ENCODE measurements at regions of chr10 and their contacts with region 1.

Region 1: GRCh38 chr10:70558871-70559810 is 43.4 kb downstream of the PRF1 start:
- DNase-seq: peak; percentile 64 to 80 (median 67)
- H3K4me3 ChIP-seq: peak overlapping the region; percentile 70
- H3K4me3 Mint-ChIP-seq: peak overlapping the region; percentile 80 to 94 (median 87)
- H3K27ac ChIP-seq: peak overlapping the region; percentile 74
- H3K27ac Mint-ChIP-seq: peak overlapping the region; percentile 32 to 96 (median 91)
- H3K4me1 ChIP-seq: peaks cover 11% of the 10 kb centered on the region
- H3K4me1 Mint-ChIP-seq: peaks cover 19 to 27% (median 22%) of the 10 kb centered on the region in 3 donors
- H3K27me3 ChIP-seq: no peaks in the 10 kb centered on the region
- H3K27me3 Mint-ChIP-seq: peaks cover 0 to 7% of the 10 kb centered on the region in 2 donors

Region 2: GRCh38 chr10:70578371-70578947 is 19.3 kb after region 1 on chr10:
- CTCF ChIA-PET with region 1: interaction called, 14 read pairs
- POLR2A ChIA-PET with region 1: no interaction called
- DNase-seq: peak; percentile 27 to 84 (median 83)
- H3K4me3 ChIP-seq: no peak overlapping the region
- H3K4me3 Mint-ChIP-seq: peak overlapping the region; percentile 26 to 76 (median 54)
- H3K27ac ChIP-seq: peak overlapping the region; percentile 36
- H3K27ac Mint-ChIP-seq: peak overlapping the region; percentile 82 to 98 (median 92)
- H3K4me1 ChIP-seq: peaks cover 50% of the 10 kb centered on the region
- H3K4me1 Mint-ChIP-seq: peaks cover 52 to 58% (median 53%) of the 10 kb centered on the region in 3 donors
- H3K27me3 ChIP-seq: no peaks in the 10 kb centered on the region
- H3K27me3 Mint-ChIP-seq: no peaks in the 10 kb centered on the region

Region 3: DNA sequence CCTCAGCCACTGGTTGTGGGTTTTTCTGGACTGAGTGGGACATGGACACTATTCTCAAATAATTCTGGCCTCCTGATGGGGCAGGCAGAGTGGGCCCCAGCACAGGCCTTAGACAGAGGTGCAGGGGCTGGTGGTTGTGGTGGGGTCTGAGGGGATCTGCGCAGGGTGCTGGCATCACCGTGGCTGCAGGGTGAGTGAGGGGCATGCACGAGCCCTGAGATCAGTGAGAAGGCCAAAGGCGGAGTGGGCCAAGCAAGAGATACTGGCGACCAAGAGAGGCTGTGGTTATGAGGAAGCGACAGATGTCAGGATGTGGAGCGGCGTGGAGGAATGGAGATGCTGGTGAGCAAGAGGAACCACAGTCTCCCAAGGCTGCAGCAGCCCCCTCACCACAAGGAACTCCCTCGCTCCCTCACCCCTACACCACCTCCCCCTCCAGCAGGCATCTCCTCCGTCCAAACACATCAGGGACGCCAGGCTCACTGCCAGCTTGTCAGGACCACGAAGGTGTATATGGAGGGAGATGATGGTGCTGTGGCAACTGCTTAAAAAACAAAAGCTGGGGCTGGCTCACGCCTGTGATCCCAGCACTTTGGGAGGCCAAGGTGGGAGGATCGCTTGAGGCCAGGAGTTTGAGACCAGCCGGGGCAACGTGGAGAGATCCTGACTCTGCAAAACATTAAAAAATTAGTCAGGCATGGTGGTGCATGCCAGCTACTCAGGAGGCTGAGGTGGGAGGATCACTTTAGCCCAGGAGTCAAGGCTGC is 33.8 kb after region 1 on chr10:
- CTCF ChIA-PET with region 1: interaction called, 13 read pairs
- POLR2A ChIA-PET with region 1: no interaction called
- DNase-seq: no peak
- H3K4me3 ChIP-seq: no peak overlapping the region
- H3K4me3 Mint-ChIP-seq: peak overlapping the region in 1 of 7 donors; percentile 51
- H3K27ac ChIP-seq: no peak overlapping the region
- H3K27ac Mint-ChIP-seq: peak overlapping the region in 7 of 8 donors; percentile 23 to 85 (median 80)
- H3K4me1 ChIP-seq: peaks cover 35% of the 10 kb centered on the region
- H3K4me1 Mint-ChIP-seq: peaks cover 67 to 88% (median 69%) of the 10 kb centered on the region in 3 donors
- H3K27me3 ChIP-seq: no peaks in the 10 kb centered on the region
- H3K27me3 Mint-ChIP-seq: peaks cover 0 to 1% of the 10 kb centered on the region in 2 donors

Region 4: GRCh38 chr10:70602665-70603448 is 43.7 kb after region 1 on chr10 and contains the start of gene PRF1:
- CTCF ChIA-PET with region 1: interaction called, 15 read pairs
- POLR2A ChIA-PET with region 1: no interaction called
- DNase-seq: peak; percentile 78 to 94 (median 86)
- H3K4me3 ChIP-seq: peak within 1 kb of the TSS; percentile 66
- H3K4me3 Mint-ChIP-seq: peak within 1 kb of the TSS; percentile 94 to 100 (median 99)
- H3K27ac ChIP-seq: peak within 1 kb of the TSS; percentile 70
- H3K27ac Mint-ChIP-seq: peak within 1 kb of the TSS; percentile 91 to 99 (median 97)
- H3K4me1 ChIP-seq: peaks cover 61% of the 10 kb centered on the region
- H3K4me1 Mint-ChIP-seq: peaks cover 57 to 78% (median 59%) of the 10 kb centered on the region in 3 donors
- H3K27me3 ChIP-seq: no peaks in the 10 kb centered on the region
- H3K27me3 Mint-ChIP-seq: no peaks in the 10 kb centered on the region
- total RNA-seq, gene PRF1: 94.8 to 95.7 TPM

Region 5: DNA sequence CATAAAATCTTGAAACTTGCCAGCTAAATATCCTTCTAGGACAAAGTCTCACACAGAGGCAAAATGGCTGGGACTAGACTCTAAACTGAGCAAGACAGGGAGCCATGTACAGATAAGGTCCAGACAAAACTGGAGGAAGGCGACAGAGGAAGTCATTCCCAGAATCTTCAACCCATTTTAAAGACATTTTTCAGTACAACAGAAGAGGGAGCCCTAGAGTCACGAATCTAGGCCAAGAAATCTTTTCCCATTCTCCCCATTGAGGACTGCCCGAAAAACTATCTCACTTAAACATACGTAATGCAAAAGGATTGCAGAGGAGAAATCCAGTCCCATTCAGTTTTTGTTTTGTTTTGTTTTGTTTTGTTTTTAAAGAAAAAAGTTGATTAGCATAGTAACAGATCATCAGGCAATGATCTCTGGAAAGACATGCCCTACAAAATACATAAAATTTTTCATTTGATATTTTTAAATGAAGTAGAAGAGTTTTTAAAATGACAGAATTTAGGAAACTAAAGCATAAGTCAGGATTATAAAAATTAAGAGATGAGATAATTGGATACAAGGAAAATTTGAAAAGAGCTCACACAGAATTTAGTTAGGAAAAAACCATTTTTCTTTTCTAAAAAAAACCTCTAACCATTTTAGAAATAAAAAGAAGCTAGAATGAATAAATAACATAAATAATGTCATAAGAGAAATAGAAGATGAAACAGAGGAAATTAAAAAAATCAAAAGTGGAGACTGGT is 60.3 kb after region 1 on chr10:
- CTCF ChIA-PET with region 1: interaction called, 13 read pairs
- POLR2A ChIA-PET with region 1: no interaction called
- DNase-seq: no peak
- H3K4me3 ChIP-seq: no peak overlapping the region
- H3K4me3 Mint-ChIP-seq: peak overlapping the region in 1 of 7 donors; percentile 57
- H3K27ac ChIP-seq: no peak overlapping the region
- H3K27ac Mint-ChIP-seq: peak overlapping the region in 6 of 8 donors; percentile 14 to 97 (median 78)
- H3K4me1 ChIP-seq: peaks cover 25% of the 10 kb centered on the region
- H3K4me1 Mint-ChIP-seq: peaks cover 42 to 54% (median 45%) of the 10 kb centered on the region in 3 donors
- H3K27me3 ChIP-seq: no peaks in the 10 kb centered on the region
- H3K27me3 Mint-ChIP-seq: no peaks in the 10 kb centered on the region

Region 6: DNA sequence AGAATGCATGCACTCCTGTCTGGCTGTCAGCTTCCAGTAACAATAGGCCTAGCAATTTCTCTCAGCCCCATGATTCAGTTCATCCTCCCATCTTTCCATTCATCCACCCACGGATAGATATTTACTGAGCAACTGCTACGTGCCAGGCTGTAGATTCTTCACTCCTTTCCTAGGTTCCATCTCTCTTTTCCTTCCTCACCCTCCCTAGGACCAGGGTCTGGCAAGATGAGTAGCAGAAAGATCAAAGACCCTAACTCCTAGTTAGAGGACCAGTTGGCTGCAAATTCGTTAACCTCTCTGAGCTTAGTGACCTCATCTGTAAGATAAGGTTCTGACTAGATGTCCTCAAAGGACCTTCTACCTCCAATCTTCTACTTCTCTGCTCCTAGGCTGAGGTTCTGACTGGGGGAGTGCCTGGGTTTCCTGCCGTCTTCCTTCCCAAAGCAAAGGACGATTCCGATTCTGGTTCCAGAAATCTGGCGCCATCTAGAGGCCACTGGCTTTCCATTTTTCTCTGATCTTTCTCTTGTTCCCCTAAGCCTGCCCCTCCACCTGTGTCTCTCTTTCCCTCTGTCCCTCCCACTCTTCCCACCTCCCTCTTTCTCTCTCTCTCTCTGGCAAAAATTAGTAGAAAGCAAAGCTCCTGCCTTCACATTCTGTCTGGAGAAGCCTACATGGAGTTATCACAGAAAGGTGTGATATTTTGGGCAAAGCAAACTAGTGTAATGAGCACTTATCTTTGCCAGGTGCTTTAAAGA is 199.8 kb after region 1 on chr10:
- CTCF ChIA-PET with region 1: interaction called, 81 read pairs
- POLR2A ChIA-PET with region 1: interaction called, 3 read pairs
- DNase-seq: peak; percentile 50 to 72 (median 55)
- H3K4me3 ChIP-seq: no peak overlapping the region
- H3K4me3 Mint-ChIP-seq: no peak overlapping the region
- H3K27ac ChIP-seq: peak overlapping the region; percentile 12
- H3K27ac Mint-ChIP-seq: no peak overlapping the region
- H3K4me1 ChIP-seq: peaks cover 7% of the 10 kb centered on the region
- H3K4me1 Mint-ChIP-seq: peaks cover 7 to 9% (median 8%) of the 10 kb centered on the region in 3 donors
- H3K27me3 ChIP-seq: no peaks in the 10 kb centered on the region
- H3K27me3 Mint-ChIP-seq: peaks cover 5 to 9% of the 10 kb centered on the region in 2 donors

Region 7: DNA sequence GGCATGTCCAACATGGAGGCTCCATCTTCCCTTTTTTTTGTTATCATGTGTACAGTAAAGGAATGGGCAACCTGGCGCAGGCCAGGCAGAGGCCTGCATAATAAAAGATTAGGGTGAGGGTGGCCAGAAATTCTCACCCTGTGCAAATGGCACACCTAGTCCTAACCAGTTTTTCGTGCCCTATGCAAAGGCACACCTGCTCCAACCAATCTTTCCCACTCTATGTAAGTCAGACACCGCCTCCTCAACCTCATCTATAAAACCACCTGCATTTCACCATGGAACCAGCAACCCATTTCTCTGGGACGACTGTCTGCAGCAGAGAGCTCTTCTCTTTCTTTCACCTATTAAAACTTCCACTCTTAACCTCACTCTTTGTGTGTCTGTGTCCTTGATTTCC is 210.0 kb after region 1 on chr10:
- CTCF ChIA-PET with region 1: no interaction called
- POLR2A ChIA-PET with region 1: no interaction called
- DNase-seq: no peak
- H3K4me3 ChIP-seq: no peak overlapping the region
- H3K4me3 Mint-ChIP-seq: no peak overlapping the region
- H3K27ac ChIP-seq: no peak overlapping the region
- H3K27ac Mint-ChIP-seq: no peak overlapping the region
- H3K4me1 ChIP-seq: no peaks in the 10 kb centered on the region
- H3K4me1 Mint-ChIP-seq: no peaks in the 10 kb centered on the region
- H3K27me3 ChIP-seq: no peaks in the 10 kb centered on the region
- H3K27me3 Mint-ChIP-seq: peaks cover 0 to 4% of the 10 kb centered on the region in 2 donors